AG04449 (cell line): ENCODE measurements at regions of chr5 and their contacts with region 1.

Region 1: DNA sequence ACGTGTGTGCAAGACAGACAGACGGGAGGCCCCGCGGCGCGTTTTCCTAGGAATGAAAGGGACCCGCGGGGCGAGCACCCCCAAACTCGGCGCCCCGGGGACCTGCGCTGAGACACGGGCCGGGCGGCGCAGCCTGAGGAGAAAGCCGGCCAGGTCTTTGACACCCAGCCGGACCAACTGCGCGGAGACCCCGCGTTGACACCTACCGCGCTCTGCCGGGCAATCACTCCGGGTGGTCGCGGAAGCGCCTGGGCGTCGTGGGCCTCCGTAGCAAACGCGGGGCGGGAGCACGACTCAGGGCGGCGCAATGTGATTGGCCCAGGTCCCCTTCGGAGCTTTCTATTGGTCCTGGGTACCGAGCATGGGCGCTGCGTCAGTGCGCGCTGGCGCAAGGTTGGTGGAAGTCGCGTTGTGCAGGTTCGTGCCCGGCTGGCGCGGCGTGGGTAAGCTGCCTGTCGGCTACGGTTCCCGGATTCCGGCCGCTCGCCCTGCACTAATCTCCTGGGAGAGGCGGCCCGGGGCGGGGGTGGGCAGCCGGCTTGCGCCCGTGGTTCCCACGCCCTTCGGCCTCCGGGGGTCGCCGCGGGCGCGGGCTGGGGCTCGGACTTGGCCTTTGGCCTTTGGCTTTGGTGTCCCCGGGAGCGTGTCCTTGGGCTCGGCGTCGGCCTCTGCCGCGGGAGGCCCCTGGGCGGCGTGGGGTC is at the starts of genes FASTKD3 and MTRR:
- DNase-seq: peak; percentile 41
- H3K4me3 ChIP-seq: peak within 1 kb of the TSS; percentile 86
- CTCF ChIP-seq: no peak

Region 2: DNA sequence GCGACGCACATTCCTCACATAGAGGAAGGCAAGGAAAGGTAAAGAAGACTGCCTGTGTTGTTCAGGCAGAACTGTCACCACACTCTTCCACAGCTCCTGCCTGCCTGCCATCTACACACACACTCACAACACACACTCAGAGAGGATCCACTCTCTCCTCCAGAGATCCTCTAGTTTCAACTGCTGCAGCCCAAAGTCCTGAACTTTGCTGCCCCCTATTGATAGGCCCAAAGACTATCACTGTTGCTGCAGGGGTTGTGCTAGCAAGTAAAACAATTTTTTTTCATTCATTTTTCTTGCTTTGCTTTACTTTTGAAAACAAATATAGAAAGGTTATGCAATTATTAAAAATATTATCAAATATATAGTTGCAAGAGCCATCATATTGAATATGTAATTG is 12.1 kb before region 1 on chr5:
- CTCF ChIA-PET with region 1: interaction called, 6 read pairs
- POLR2A ChIA-PET with region 1: interaction called, 11 read pairs
- DNase-seq: no peak
- H3K4me3 ChIP-seq: no peak overlapping the region
- CTCF ChIP-seq: peak; percentile 48

Region 3: DNA sequence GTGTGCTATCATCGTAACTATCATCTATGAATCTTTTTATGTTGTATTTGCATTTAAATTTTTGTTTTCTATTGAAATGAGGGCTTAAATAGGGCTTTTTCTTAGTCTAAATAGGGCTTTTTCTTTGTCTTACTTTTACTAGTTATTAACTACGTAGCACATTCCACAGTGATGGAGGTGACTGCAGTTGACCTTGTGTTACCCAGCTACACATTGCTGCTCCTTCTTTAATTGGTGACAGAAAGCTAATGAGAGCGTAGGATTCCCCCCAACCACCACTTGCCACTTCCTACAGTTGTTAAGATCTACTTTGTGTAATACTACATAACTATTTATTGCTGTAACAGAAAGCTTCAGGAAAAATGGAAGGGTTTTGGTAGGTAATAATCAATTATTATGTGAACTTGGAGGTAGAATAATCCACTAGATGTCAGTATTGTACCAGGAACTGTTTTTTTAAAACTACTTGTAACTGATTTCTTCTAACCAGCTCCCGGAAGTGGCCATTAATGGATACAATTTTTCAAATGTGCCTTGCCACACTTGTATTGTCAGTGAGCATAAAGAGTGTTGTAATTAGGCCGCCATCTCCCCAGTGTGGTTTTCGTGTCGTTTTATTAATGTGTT is 18.0 kb after region 1 on chr5:
- CTCF ChIA-PET with region 1: interaction called, 98 read pairs
- POLR2A ChIA-PET with region 1: no interaction called
- DNase-seq: no peak
- H3K4me3 ChIP-seq: no peak overlapping the region
- CTCF ChIP-seq: peak; percentile 18